Endothelial cell of umbilical vein (primary cell): ENCODE measurements at regions of chr11 and their contacts with region 1.

Region 1: GRCh38 chr11:12200279-12201010 is 90.1 kb downstream of the MICAL2 start:
- DNase-seq: peak; percentile 93
- H3K4me3 ChIP-seq: no peak overlapping the region
- H3K27ac ChIP-seq: peak overlapping the region; percentile 94
- H3K4me1 ChIP-seq: peaks cover 45% of the 10 kb centered on the region
- H3K27me3 ChIP-seq: no peaks in the 10 kb centered on the region
- CTCF ChIP-seq: no peak
- POLR2A ChIP-seq: no peak

Region 2: GRCh38 chr11:12122083-12122482 is 78.4 kb before region 1 on chr11:
- CTCF ChIA-PET with region 1: interaction called, 13 read pairs
- POLR2A ChIA-PET with region 1: no interaction called
- dilution Hi-C with region 1: no loop called
- intact Hi-C with region 1: loop called (anchors 1 kb)
- DNase-seq: no peak
- H3K4me3 ChIP-seq: no peak overlapping the region
- H3K27ac ChIP-seq: no peak overlapping the region
- H3K4me1 ChIP-seq: peaks cover 38% of the 10 kb centered on the region
- H3K27me3 ChIP-seq: no peaks in the 10 kb centered on the region
- CTCF ChIP-seq: peak; percentile 43 to 56
- POLR2A ChIP-seq: no peak

Region 3: GRCh38 chr11:12182676-12183541 is 17.5 kb before region 1 on chr11:
- CTCF ChIA-PET with region 1: interaction called, 36 read pairs
- POLR2A ChIA-PET with region 1: interaction called, 23 read pairs
- dilution Hi-C with region 1: no loop called
- intact Hi-C with region 1: loop called (anchors 1 kb)
- DNase-seq: peak; percentile 89
- H3K4me3 ChIP-seq: no peak overlapping the region
- H3K27ac ChIP-seq: peak overlapping the region; percentile 99
- H3K4me1 ChIP-seq: peaks cover 54% of the 10 kb centered on the region
- H3K27me3 ChIP-seq: no peaks in the 10 kb centered on the region
- CTCF ChIP-seq: no peak
- POLR2A ChIP-seq: no peak

Region 4: GRCh38 chr11:12224537-12224893 is 24.1 kb after region 1 on chr11:
- CTCF ChIA-PET with region 1: interaction called, 15 read pairs
- POLR2A ChIA-PET with region 1: interaction called, 8 read pairs
- dilution Hi-C with region 1: no loop called
- intact Hi-C with region 1: loop called (anchors 1 kb)
- DNase-seq: peak; percentile 28
- H3K4me3 ChIP-seq: no peak overlapping the region
- H3K27ac ChIP-seq: peak overlapping the region; percentile 65
- H3K4me1 ChIP-seq: peaks cover 35% of the 10 kb centered on the region
- H3K27me3 ChIP-seq: no peaks in the 10 kb centered on the region
- CTCF ChIP-seq: no peak
- POLR2A ChIP-seq: no peak

Region 5: DNA sequence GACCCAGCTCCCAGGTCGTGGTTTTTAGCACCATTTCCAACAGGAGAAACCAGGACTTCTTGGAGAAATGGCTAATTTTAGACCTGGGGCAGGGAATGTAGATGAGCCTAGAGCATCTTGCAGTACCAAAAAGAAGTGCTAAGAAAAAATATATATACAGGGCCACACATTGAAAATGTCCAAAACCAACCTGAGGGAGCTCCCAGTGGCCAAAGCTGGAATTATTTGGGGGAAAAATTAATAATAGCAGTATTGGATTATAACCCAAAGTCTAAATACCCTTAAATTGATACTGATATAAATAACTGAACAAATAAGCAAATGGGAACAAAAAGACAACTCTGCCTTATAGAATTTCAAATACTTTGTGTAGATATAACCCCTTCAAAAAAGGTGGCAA is 284.9 kb after region 1 on chr11:
- CTCF ChIA-PET with region 1: no interaction called
- POLR2A ChIA-PET with region 1: no interaction called
- dilution Hi-C with region 1: no loop called
- intact Hi-C with region 1: no loop called
- DNase-seq: peak; percentile 14
- H3K4me3 ChIP-seq: no peak overlapping the region
- H3K27ac ChIP-seq: no peak overlapping the region
- H3K4me1 ChIP-seq: no peaks in the 10 kb centered on the region
- H3K27me3 ChIP-seq: no peaks in the 10 kb centered on the region
- CTCF ChIP-seq: peak; percentile 31 to 37
- POLR2A ChIP-seq: no peak